Posterior vena cava (tissue), 2 donors: ENCODE measurements at regions of chr19 and their contacts with region 1.

Region 1: GRCh38 chr19:38634757-38635482 is 12.5 kb upstream of the ACTN4 start:
- DNase-seq: peak; percentile 93

Region 2: DNA sequence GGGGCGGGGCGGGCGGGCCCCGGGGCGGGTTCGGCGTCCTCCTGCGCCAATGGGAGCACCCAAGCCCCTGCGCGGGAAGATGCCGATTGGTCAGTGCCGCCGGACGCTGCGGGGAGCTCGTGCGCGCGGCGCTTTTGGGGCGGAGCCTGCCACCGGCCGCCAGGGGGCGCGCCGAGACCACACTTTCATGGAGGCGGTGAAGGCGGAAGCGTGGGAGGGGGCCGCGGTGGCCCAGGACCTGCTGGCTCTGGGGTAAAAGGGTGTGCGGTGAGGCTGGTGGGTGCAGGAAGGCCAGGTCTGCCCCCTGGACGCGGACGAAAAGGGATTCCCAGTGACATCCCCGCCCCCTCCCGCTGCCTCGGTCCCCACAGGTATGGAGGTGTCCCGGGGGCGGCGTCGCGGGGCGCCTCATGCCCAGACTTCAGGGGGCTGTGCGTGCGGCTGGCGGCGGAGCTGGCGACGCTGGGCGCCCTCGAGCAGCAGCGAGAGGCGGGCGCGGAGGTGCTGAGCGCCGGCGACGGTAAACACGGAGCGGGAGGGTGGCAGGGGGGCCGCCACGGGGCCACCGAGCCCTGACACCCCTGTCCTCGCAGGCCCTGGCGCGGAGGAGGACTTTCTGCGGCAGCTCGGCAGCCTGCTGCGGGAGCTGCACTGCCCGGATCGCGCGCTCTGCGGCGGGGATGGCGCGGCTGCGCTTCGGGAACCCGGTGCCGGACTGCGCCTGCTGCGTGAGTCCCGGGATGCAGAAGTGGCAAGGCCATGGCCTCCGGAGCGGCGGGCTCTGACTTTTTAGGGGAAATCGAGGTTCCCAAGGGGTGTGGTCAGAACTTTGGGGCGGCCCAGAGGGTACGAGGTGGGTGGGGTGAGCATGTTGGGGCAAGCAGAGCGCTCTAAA is 231.7 kb before region 1 on chr19 and contains the start of gene FAM98C:
- intact Hi-C with region 1: loop called (anchors 10 kb)
- DNase-seq: peak; percentile 98
- total RNA-seq, gene FAM98C: 9.6 to 10.7 TPM

Region 3: DNA sequence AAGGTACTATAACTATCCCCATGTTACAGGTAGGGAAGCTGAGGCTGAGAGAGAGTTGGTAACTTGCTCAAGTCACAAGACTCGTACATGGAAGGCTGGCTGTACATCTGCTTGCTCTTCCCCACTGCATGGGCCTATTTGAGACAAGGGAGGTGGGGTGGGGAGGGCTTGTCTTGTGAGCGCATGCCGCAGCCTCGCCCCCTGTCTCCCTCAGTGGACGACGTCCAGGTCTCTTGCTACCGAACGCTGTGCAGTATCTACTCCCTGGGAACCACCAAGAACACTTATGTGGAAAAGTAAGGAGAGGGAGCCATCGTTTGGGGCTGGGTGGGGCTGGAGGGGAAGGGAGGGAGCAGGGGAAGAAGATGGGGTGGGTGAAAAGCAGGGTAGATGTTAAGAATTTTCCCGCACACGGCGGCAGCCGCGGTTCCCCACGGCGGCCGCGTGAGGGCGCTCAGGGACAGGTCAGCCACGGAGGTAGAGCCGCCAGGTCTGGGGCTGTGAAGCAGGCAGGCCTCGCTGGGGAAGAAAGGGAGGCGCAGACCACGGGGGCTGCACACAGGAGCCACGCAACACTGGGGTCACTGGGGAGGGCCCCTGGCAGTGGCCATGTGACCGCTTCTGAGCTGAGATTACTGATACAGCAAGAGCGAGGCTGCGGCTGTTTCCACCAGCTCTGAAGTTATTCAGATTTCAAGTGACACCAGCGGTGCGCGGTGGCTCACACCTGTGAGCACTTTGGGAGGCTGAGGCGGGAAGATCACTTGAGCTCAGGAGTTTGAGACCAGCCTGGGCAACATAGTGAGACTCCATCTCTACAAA is 119.9 kb before region 1 on chr19:
- intact Hi-C with region 1: loop called in 1 of 2 experiments (anchors 5 kb)
- DNase-seq: peak; percentile 90